Mucosa of descending colon (tissue), 3 donors: ENCODE measurements at regions of chr10 and their contacts with region 1.

Region 1: GRCh38 chr10:103244663-103245271 is 920 bp upstream of the RPEL1 start:
- DNase-seq: peak in 2 of 3 donors; percentile 70 to 84
- ATAC-seq: peak; percentile 49
- H3K4me3 ChIP-seq: no peak overlapping the region
- H3K4me1 ChIP-seq: peaks cover 20% of the 10 kb centered on the region
- CTCF ChIP-seq: peak; percentile 64

Region 2: GRCh38 chr10:102927311-102928010 is 317.3 kb before region 1 on chr10:
- intact Hi-C with region 1: loop called in 1 of 2 experiments (anchors 10 kb)
- DNase-seq: peak in 2 of 3 donors; percentile 34 to 45
- ATAC-seq: no peak
- H3K4me3 ChIP-seq: no peak overlapping the region
- H3K4me1 ChIP-seq: no peaks in the 10 kb centered on the region
- CTCF ChIP-seq: no peak